ENCODE measurements at regions of chr16 and their contacts with region 1.

Region 1: GRCh38 chr16:4802659-4803287 is 340 bp upstream of the ROGDI start:
- DNase-seq: peak; percentile 76 to 93 (median 88)
- ATAC-seq: peak; percentile 83
- H3K4me3 ChIP-seq: peak overlapping the region; percentile 61
- H3K4me3 Mint-ChIP-seq: peak overlapping the region; percentile 92
- H3K27ac ChIP-seq: peak overlapping the region in 1 of 2 donors; percentile 56
- H3K27ac Mint-ChIP-seq: peak overlapping the region; percentile 96
- H3K4me1 ChIP-seq: peaks cover 24% of the 10 kb centered on the region
- H3K4me1 Mint-ChIP-seq: peaks cover 22% of the 10 kb centered on the region
- H3K27me3 ChIP-seq: no peaks in the 10 kb centered on the region
- H3K27me3 Mint-ChIP-seq: no peaks in the 10 kb centered on the region
- CTCF ChIP-seq: no peak

Region 2: DNA sequence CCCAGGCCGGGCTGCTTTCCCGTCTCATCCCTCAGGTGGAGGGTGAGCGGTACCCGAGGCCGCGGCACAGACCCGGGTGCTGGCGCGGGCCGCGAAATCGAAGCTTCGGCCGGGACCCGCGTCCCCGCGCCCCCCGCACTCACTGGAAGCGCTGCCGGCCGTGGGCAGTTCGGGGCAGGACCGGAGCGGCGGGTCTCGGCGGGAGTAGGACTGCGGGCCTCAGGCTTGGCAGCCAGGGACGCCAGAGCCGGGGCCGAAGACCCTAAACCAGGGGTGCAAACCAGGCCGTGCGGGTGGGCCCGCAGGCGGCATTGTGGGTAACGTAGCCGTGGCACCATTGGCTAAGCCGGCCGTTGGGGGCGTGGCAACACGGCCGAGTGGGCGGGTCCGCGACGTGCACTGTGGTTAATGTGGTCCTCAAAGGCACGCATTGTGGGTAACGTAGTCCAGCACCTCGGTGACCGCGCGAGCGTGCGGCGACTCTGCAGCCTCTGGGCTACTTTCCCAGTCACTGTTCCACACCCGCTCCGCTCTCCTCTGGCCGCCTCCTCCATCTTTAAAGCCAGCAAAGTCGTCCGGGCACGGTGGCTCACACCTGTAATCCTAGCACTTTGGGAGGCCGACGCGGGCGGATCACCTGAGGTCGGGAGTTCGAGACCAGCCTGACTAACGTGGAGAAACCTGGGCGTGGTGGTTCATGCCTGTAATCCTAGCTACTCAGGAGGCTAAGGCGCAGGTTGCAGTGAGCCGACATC is 35.7 kb before region 1 on chr16 and contains the start of gene ZNF500:
- CTCF ChIA-PET with region 1: interaction called, 5 read pairs
- POLR2A ChIA-PET with region 1: interaction called, 16 read pairs
- intact Hi-C with region 1: loop called (anchors 1 kb)
- DNase-seq: peak; percentile 90 to 99 (median 96)
- ATAC-seq: peak; percentile 90
- H3K4me3 ChIP-seq: peak within 1 kb of the TSS; percentile 80
- H3K4me3 Mint-ChIP-seq: peak within 1 kb of the TSS; percentile 96
- H3K27ac ChIP-seq: peak within 1 kb of the TSS; percentile 52 to 69
- H3K27ac Mint-ChIP-seq: peak within 1 kb of the TSS; percentile 90
- H3K4me1 ChIP-seq: peaks cover 41% of the 10 kb centered on the region
- H3K4me1 Mint-ChIP-seq: peaks cover 32% of the 10 kb centered on the region
- H3K27me3 ChIP-seq: no peaks in the 10 kb centered on the region
- H3K27me3 Mint-ChIP-seq: no peaks in the 10 kb centered on the region
- CTCF ChIP-seq: no peak
- total RNA-seq, gene ZNF500: 11.8 to 12.4 TPM

Region 3: GRCh38 chr16:5580296-5580695 is 777.5 kb after region 1 on chr16:
- CTCF ChIA-PET with region 1: no interaction called
- POLR2A ChIA-PET with region 1: no interaction called
- intact Hi-C with region 1: no loop called
- DNase-seq: no peak
- ATAC-seq: no peak
- H3K4me3 ChIP-seq: no peak overlapping the region
- H3K4me3 Mint-ChIP-seq: no peak overlapping the region
- H3K27ac ChIP-seq: no peak overlapping the region
- H3K27ac Mint-ChIP-seq: no peak overlapping the region
- H3K4me1 ChIP-seq: no peaks in the 10 kb centered on the region
- H3K4me1 Mint-ChIP-seq: no peaks in the 10 kb centered on the region
- H3K27me3 ChIP-seq: peaks cover 0 to 6% of the 10 kb centered on the region in 2 experiments
- H3K27me3 Mint-ChIP-seq: peaks cover 6% of the 10 kb centered on the region
- CTCF ChIP-seq: no peak